Activated CD4-positive, alpha-beta T cell treated with anti-CD3 and anti-CD28 coated beads for 36 hours (primary cell): ENCODE measurements at regions of chr17 and their contacts with region 1.

Region 1: DNA sequence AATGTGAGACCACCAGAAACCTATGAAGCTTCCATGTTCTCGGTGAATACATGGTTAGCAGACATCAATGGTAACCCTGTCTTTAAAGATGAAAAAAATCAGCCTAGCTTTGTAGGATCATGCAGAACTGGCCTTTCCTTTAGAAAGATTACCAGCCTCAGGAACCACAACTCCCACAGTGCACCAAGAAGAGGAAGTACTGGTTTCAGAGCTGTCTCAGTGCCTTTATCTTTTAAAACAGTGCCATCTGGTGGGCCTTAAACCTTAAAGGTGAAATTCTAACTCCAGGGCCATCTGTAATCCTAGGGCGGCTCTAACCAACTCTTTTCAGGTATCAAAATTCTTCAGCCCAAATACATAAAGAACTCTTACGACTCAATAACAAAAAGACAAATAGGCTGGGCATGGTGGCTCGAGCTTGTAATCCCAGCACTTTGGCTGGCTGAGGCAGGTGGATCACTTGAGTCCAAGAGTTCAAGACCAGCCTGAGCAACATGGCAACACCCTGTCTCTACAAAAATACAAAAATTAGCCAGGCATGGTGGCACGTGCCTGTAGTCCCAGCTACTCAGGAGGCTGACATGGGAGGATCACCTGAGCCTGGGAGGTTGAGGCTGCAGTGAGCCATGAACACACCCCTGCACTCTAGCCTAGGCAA is 5.4 kb downstream of the ATPAF2 start:
- DNase-seq: peak; percentile 69
- ATAC-seq: peak; percentile 69
- H3K4me3 Mint-ChIP-seq: no peak overlapping the region
- H3K27ac Mint-ChIP-seq: no peak overlapping the region
- H3K4me1 Mint-ChIP-seq: peaks cover 31% of the 10 kb centered on the region
- H3K27me3 Mint-ChIP-seq: no peaks in the 10 kb centered on the region

Region 2: DNA sequence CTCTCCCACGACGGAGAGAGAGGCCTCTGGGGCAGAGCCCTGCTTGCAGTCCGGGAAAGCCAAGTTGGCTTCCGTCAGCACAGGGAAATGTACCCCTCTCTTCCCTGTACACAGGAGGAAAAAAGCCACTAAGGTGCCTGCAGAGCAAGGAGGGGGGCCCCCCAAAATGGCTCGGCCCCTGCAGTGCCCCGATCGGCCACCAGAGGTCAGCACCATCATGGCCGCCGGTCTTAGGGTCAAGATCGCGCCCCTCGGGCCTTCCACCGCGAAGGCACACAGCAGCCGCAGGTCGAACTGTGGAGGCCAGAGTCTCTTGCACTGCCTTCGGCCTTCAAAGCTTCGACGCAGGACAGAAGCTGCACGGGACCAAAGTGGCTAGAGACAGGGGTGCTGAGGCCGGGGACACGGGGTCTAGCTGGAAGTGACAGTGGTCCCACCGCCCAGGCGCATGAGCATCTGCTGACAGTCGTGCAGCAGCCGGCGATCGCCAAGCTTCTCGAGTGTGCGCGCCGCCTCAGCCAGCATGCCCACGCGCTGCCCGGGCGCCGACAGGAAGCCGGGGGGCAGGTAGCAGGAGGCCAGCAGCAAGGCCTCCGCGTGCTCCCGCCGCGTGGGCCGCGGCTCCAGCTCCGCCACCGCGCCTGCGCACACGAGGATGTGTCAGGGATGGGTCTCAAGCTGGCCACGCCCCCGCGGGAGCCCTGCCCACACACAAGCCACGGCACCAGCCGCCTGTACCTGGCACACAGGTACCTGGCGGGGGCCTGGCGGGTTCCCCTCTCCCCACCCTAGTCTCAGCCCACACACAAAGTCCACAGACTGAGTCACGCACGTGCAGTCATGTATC is 221.1 kb before region 1 on chr17:
- CTCF ChIA-PET with region 1: interaction called, 6 read pairs
- POLR2A ChIA-PET with region 1: no interaction called
- intact Hi-C with region 1: loop called in 1 of 2 experiments (anchors 2 kb)
- DNase-seq: peak; percentile 78
- ATAC-seq: peak; percentile 37
- H3K4me3 Mint-ChIP-seq: no peak overlapping the region
- H3K27ac Mint-ChIP-seq: no peak overlapping the region
- H3K4me1 Mint-ChIP-seq: peaks cover 11% of the 10 kb centered on the region
- H3K27me3 Mint-ChIP-seq: no peaks in the 10 kb centered on the region

Region 3: DNA sequence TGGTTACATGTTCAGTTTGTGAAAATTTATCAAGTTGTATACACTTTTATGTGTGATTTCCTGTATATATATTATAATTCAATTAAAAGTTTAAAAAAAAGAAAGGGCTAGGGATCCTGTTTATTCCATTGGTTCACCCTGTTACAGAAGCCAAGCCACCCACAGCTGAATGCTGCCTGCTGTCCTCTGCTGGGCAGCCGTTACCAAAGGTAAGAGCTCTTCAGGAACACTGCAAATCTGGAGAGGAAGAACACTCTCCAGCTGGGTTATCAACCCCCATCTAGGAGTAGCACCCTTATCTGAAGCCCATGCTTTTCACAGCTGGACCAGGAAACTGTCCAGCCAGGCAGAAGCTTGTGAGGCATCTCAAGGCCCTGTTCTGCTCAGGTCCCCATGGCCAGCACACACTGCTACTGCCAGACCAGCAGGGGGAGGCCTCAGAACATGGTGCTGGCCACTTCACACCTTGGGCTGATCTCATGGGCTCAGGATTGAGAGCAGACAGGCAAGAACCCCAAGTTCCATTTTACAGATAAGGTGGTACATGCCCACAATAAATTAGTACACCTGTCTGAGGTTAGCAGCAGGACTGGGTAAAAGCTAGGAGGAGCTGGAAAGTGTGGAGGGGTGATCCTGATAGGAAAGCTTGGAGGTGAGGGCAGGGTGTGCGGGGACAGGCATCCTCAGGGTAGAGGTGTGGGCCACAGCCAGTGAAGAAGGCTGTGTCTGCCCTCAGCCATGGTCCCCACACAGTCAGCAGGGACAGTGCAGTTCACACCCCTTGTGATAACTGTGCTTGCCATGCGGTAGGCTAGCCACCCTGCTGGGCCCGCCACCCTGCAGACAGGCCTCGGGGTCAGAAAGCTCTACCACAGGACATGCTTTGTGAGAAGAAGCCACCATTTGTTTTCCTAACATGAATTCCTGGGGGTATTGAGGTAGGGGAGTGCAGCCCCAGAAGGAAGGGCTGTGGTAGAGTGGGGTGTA is 142.5 kb before region 1 on chr17:
- CTCF ChIA-PET with region 1: interaction called, 42 read pairs
- POLR2A ChIA-PET with region 1: no interaction called
- intact Hi-C with region 1: loop called (anchors 1 kb)
- DNase-seq: peak; percentile 73
- ATAC-seq: peak; percentile 88
- H3K4me3 Mint-ChIP-seq: no peak overlapping the region
- H3K27ac Mint-ChIP-seq: no peak overlapping the region
- H3K4me1 Mint-ChIP-seq: peaks cover 6% of the 10 kb centered on the region
- H3K27me3 Mint-ChIP-seq: no peaks in the 10 kb centered on the region

Region 4: GRCh38 chr17:17919169-17920107 is 114.1 kb before region 1 on chr17:
- CTCF ChIA-PET with region 1: interaction called, 12 read pairs
- POLR2A ChIA-PET with region 1: no interaction called
- intact Hi-C with region 1: loop called in 1 of 2 experiments (anchors 1 kb)
- DNase-seq: peak; percentile 81
- ATAC-seq: peak; percentile 95
- H3K4me3 Mint-ChIP-seq: no peak overlapping the region
- H3K27ac Mint-ChIP-seq: no peak overlapping the region
- H3K4me1 Mint-ChIP-seq: peaks cover 11% of the 10 kb centered on the region
- H3K27me3 Mint-ChIP-seq: no peaks in the 10 kb centered on the region

Region 5: GRCh38 chr17:17959520-17960361 is 73.8 kb before region 1 on chr17:
- CTCF ChIA-PET with region 1: interaction called, 10 read pairs
- POLR2A ChIA-PET with region 1: interaction called, 3 read pairs
- intact Hi-C with region 1: no loop called
- DNase-seq: peak; percentile 67
- ATAC-seq: peak; percentile 61
- H3K4me3 Mint-ChIP-seq: peak overlapping the region; percentile 71
- H3K27ac Mint-ChIP-seq: peak overlapping the region; percentile 95
- H3K4me1 Mint-ChIP-seq: peaks cover 69% of the 10 kb centered on the region
- H3K27me3 Mint-ChIP-seq: no peaks in the 10 kb centered on the region

Region 6: DNA sequence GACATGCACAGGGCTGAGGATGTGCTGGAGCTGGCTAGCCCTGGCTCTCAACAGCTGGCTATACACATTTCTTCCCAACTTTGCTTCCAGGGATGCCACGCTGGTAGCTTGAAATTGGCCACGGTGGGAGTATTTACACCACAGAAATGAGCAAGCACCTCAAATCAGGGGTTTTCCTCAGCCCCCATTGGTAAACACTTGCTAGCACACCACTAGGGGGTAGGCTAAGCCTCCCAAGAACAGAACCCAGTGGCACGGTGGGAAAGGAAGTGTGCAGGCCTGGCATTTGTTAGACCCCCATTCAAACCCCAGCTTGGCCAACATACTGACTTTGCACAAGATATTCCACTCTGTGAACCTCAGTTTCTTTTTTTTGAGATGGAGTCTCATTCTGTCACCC is 48.0 kb before region 1 on chr17:
- CTCF ChIA-PET with region 1: interaction called, 12 read pairs
- POLR2A ChIA-PET with region 1: no interaction called
- intact Hi-C with region 1: loop called in 1 of 2 experiments (anchors 1 kb)
- DNase-seq: peak; percentile 20
- ATAC-seq: no peak
- H3K4me3 Mint-ChIP-seq: no peak overlapping the region
- H3K27ac Mint-ChIP-seq: no peak overlapping the region
- H3K4me1 Mint-ChIP-seq: no peaks in the 10 kb centered on the region
- H3K27me3 Mint-ChIP-seq: no peaks in the 10 kb centered on the region

Region 7: GRCh38 chr17:17994271-17995069 is 39.1 kb before region 1 on chr17:
- CTCF ChIA-PET with region 1: interaction called, 4 read pairs
- POLR2A ChIA-PET with region 1: no interaction called
- intact Hi-C with region 1: loop called in 1 of 2 experiments (anchors 2 kb)
- DNase-seq: peak; percentile 40
- ATAC-seq: peak; percentile 24
- H3K4me3 Mint-ChIP-seq: no peak overlapping the region
- H3K27ac Mint-ChIP-seq: no peak overlapping the region
- H3K4me1 Mint-ChIP-seq: no peaks in the 10 kb centered on the region
- H3K27me3 Mint-ChIP-seq: no peaks in the 10 kb centered on the region